ENCODE measurements at regions of chr20 and their contacts with region 1.

Region 1: GRCh38 chr20:23585808-23586734 is 17.8 kb upstream of the CST9L start:
- DNase-seq: peak in 1 of 9 experiments; percentile 35
- ATAC-seq: no peak
- H3K4me3 ChIP-seq: no peak overlapping the region
- H3K4me3 Mint-ChIP-seq: no peak overlapping the region
- H3K27ac ChIP-seq: no peak overlapping the region
- H3K27ac Mint-ChIP-seq: no peak overlapping the region
- H3K4me1 ChIP-seq: no peaks in the 10 kb centered on the region
- H3K4me1 Mint-ChIP-seq: peaks cover 6% of the 10 kb centered on the region
- H3K27me3 ChIP-seq: no peaks in the 10 kb centered on the region
- H3K27me3 Mint-ChIP-seq: peaks cover 23% of the 10 kb centered on the region
- CTCF ChIP-seq: no peak

Region 2: GRCh38 chr20:23407781-23408464 is 178.1 kb before region 1 on chr20:
- CTCF ChIA-PET with region 1: no interaction called
- POLR2A ChIA-PET with region 1: no interaction called
- intact Hi-C with region 1: no loop called
- DNase-seq: peak in 3 of 9 experiments; percentile 45 to 71 (median 64)
- ATAC-seq: peak; percentile 98
- H3K4me3 ChIP-seq: no peak overlapping the region
- H3K4me3 Mint-ChIP-seq: peak overlapping the region; percentile 20
- H3K27ac ChIP-seq: no peak overlapping the region
- H3K27ac Mint-ChIP-seq: peak overlapping the region; percentile 78
- H3K4me1 ChIP-seq: peaks cover 7% of the 10 kb centered on the region
- H3K4me1 Mint-ChIP-seq: peaks cover 51% of the 10 kb centered on the region
- H3K27me3 ChIP-seq: no peaks in the 10 kb centered on the region
- H3K27me3 Mint-ChIP-seq: no peaks in the 10 kb centered on the region
- CTCF ChIP-seq: no peak

Region 3: DNA sequence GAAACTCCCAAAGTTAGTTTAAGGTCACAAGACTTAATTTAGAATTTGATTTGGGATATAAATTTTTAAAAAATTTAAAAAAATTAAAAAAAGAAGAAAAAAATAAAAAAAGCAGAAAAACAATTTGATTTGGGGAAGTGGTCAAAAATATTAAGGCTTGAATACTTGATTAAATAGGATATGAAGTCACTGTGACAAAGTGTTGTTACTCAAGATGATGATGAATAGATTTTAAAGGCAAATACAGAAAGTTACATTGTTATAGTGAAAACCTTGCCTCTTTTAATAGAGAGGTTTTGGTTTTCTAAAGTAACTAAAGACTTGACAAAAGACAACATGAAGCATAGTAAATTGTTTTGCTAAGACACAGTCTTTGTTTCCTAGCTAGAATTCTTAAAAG is 12.4 kb after region 1 on chr20:
- CTCF ChIA-PET with region 1: no interaction called
- POLR2A ChIA-PET with region 1: no interaction called
- intact Hi-C with region 1: loop called in 1 of 2 experiments (anchors 2 kb)
- DNase-seq: no peak
- ATAC-seq: no peak
- H3K4me3 ChIP-seq: no peak overlapping the region
- H3K4me3 Mint-ChIP-seq: no peak overlapping the region
- H3K27ac ChIP-seq: no peak overlapping the region
- H3K27ac Mint-ChIP-seq: no peak overlapping the region
- H3K4me1 ChIP-seq: no peaks in the 10 kb centered on the region
- H3K4me1 Mint-ChIP-seq: no peaks in the 10 kb centered on the region
- H3K27me3 ChIP-seq: no peaks in the 10 kb centered on the region
- H3K27me3 Mint-ChIP-seq: no peaks in the 10 kb centered on the region
- CTCF ChIP-seq: no peak

Region 4: DNA sequence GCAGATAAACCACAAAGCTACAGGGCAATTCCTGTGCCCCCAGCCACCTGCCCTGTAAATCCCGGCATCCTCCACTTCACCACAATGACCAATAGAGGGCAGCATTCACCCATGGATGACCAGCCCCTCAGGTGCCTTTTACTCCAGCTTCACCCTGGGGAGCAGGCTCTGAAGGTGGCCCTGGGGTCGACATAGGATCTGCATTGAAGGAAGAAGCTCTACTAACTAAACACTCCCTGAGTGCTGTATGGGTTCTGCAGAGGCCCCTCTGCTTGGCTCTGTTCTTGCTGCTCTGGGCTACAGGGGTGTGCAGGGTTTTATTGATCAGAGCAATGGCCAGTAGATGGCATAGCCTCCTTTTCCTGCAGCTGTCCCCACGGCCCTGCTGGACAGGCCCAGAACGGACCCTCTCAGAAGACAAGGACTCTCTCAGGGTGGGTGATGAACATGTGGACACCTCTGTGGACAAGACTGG is 82.4 kb after region 1 on chr20:
- CTCF ChIA-PET with region 1: no interaction called
- POLR2A ChIA-PET with region 1: no interaction called
- intact Hi-C with region 1: no loop called
- DNase-seq: peak in 4 of 9 experiments; percentile 5 to 57 (median 30)
- ATAC-seq: no peak
- H3K4me3 ChIP-seq: no peak overlapping the region
- H3K4me3 Mint-ChIP-seq: no peak overlapping the region
- H3K27ac ChIP-seq: no peak overlapping the region
- H3K27ac Mint-ChIP-seq: no peak overlapping the region
- H3K4me1 ChIP-seq: no peaks in the 10 kb centered on the region
- H3K4me1 Mint-ChIP-seq: no peaks in the 10 kb centered on the region
- H3K27me3 ChIP-seq: no peaks in the 10 kb centered on the region
- H3K27me3 Mint-ChIP-seq: no peaks in the 10 kb centered on the region
- CTCF ChIP-seq: peak; percentile 58